ENCODE measurements at regions of chr19 and their contacts with region 1.

Region 1: DNA sequence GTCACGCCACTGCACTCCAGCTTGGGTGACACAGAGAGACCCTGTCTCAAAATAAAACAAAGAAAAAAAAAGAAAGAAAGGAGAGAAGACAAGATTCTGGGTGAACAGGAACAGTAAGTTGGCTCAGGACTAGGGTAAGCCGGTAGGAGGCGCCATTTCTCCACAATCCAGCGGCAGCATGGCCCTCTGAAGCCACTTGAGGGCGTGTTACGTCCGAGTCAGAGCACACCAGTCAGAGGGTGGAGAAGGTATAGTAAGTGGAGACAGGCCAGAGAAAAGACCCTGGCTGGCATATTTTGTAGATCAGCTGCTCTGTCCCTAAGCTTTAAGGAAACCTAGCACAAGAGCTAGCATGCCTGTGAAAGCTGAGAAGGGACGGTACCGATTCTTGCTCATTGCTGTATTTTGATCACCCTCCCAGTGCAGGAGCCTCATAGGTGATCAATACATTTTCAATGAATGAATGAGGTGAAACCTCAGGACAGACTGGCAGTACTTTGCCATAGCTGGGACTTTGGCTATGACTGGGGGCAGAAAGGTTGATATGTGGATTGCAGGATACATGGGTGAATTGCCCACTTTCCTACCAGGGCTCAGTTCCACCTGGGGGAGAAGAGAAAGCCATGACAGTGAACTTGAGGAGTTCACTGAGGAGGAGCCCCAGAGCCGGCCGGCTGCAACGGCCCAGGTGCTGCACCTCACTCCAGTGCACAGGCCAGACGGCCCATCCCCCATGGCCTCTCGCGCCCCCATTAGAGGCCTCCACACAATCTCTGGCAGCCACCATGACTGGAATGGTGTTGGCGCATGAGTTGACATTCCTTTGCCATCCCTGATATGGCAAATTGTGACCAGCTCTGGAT is 23.5 kb downstream of the POU2F2 start:
- DNase-seq: peak; percentile 86 to 91 (median 89)
- H3K4me3 ChIP-seq: no peak overlapping the region
- H3K4me3 Mint-ChIP-seq: no peak overlapping the region
- H3K27ac ChIP-seq: peak overlapping the region in 1 of 2 donors; percentile 28
- H3K27ac Mint-ChIP-seq: peak overlapping the region in 6 of 7 donors; percentile 58 to 72 (median 61)
- H3K4me1 ChIP-seq: peaks cover 0 to 13% of the 10 kb centered on the region in 2 donors
- H3K4me1 Mint-ChIP-seq: peaks cover 25% of the 10 kb centered on the region
- H3K27me3 ChIP-seq: no peaks in the 10 kb centered on the region
- H3K27me3 Mint-ChIP-seq: no peaks in the 10 kb centered on the region
- CTCF ChIP-seq: peak; percentile 100

Region 2: GRCh38 chr19:42132851-42133528 is 24.2 kb after region 1 on chr19:
- intact Hi-C with region 1: loop called in 1 of 2 experiments (anchors 2 kb)
- DNase-seq: peak; percentile 68 to 70 (median 68)
- H3K4me3 ChIP-seq: peak overlapping the region; percentile 86 to 98 (median 97)
- H3K4me3 Mint-ChIP-seq: peak overlapping the region; percentile 98 to 99
- H3K27ac ChIP-seq: peak overlapping the region; percentile 85 to 89
- H3K27ac Mint-ChIP-seq: peak overlapping the region; percentile 80 to 97 (median 95)
- H3K4me1 ChIP-seq: peaks cover 45 to 65% of the 10 kb centered on the region in 2 donors
- H3K4me1 Mint-ChIP-seq: peaks cover 54% of the 10 kb centered on the region
- H3K27me3 ChIP-seq: no peaks in the 10 kb centered on the region
- H3K27me3 Mint-ChIP-seq: peaks cover 0 to 3% (median 3%) of the 10 kb centered on the region in 3 donors
- CTCF ChIP-seq: peak; percentile 99

Region 3: DNA sequence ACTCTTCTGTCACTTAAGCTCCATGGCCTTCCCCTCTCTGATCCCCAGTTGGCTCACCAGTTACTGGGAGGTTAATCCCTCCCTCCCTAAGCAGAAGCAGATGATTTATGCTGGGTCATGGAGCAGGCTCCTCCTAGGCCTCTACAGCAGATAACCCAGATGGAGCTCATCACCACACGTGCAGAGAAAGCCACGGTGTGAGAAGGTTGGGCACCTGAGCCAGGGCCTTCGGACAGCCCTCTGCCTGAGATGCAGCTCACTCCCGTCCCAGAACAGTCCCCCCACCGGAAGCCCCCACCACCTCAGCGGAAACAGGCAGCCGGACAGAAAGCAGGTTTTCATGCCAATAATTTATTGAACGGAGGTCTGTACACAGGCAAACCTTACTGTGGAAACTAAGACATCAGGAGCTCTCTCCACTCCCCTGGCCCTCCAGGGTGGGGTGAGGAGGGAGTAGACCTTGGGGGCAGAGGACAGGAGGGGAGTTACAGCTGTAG is 121.1 kb after region 1 on chr19:
- intact Hi-C with region 1: loop called in 1 of 2 experiments (anchors 10 kb)
- DNase-seq: no peak
- H3K4me3 ChIP-seq: no peak overlapping the region
- H3K4me3 Mint-ChIP-seq: no peak overlapping the region
- H3K27ac ChIP-seq: peak overlapping the region in 1 of 2 donors; percentile 37
- H3K27ac Mint-ChIP-seq: peak overlapping the region in 4 of 7 donors; percentile 52 to 72 (median 70)
- H3K4me1 ChIP-seq: no peaks in the 10 kb centered on the region
- H3K4me1 Mint-ChIP-seq: peaks cover 10% of the 10 kb centered on the region
- H3K27me3 ChIP-seq: no peaks in the 10 kb centered on the region
- H3K27me3 Mint-ChIP-seq: no peaks in the 10 kb centered on the region
- CTCF ChIP-seq: no peak

Region 4: DNA sequence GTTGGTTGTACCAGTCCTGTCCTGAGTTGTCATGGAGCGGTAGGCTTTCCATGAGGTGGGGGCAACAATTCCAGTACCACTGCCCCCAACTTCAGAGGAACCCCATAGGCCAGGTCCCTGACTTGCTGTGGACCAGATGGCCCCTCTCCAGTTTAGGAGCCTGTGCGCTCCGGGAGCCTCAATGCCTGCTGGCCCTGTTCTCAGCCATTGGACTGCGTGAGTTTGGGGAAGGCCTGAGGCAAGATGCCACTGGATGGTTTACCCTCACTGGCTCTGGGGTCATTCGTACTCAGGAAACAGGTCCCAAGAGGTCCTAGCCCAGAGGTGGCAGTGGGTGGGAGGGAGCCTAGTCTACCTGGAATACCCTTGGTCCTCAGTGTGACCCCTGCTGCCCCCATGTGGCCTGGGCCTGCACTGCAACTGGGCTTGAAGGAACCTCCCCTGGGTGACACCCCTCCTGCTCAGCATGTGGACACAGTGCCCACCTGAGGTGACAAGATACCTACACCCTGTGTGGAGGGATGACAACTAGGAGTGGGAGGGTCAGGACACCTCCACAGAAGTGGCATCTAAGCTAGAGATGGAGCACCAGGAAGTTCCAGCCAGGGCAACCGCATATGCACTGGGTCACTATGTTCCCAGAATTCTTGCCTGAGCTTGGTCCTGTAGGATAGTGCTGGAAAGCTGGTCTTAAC is 187.2 kb after region 1 on chr19:
- intact Hi-C with region 1: loop called (anchors 5 to 10 kb)
- DNase-seq: peak; percentile 55 to 65 (median 64)
- H3K4me3 ChIP-seq: no peak overlapping the region
- H3K4me3 Mint-ChIP-seq: no peak overlapping the region
- H3K27ac ChIP-seq: no peak overlapping the region
- H3K27ac Mint-ChIP-seq: peak overlapping the region in 4 of 7 donors; percentile 6 to 77 (median 36)
- H3K4me1 ChIP-seq: no peaks in the 10 kb centered on the region
- H3K4me1 Mint-ChIP-seq: peaks cover 2% of the 10 kb centered on the region
- H3K27me3 ChIP-seq: no peaks in the 10 kb centered on the region
- H3K27me3 Mint-ChIP-seq: peaks cover 0 to 2% (median 0%) of the 10 kb centered on the region in 3 donors
- CTCF ChIP-seq: peak; percentile 98

Region 5: DNA sequence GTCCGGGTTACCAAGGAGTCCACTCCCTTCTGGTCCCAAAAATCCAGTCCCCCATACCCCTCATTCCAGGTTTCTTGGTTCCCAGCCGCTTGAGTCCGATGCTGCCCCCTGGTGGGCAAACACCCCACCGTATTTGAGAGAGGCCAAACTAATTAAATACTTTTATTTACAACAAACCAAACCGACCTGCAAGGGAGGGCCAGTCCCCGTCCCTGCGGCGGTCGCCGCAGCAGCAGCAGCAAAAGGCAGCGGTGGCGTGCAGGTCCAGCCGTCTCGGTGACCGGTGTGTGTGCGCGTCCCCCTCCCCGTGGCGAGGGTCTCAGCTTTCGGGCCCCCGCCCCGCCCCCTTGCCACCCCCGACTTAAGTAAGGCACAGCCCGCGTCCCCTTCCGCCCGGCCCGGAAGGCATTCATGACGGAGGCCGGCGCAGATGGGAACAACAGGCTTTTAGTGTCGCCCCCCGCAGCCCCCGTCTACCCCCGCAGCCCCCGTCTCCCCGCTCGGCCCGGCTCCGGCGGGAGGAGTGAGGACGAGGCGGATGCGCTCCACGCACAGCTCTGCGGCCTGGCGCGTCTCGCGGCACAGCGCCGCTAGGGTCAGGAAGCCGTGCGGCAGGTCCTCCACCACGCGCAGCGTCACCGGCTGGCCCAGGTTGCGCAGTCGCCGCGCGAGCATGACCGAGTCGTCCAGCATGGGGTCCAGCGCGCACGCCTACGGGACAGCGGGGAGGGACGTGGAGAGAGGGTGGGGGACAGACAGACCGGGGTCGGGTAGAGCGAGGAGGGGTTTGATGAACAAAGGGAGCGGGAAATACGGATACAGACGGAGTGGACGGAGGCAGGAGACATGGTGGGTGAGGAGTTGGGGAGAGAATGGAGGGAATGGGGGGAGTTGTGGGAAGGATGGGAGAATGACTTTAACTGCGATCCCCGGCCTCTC is 292.9 kb after region 1 on chr19:
- intact Hi-C with region 1: loop called in 1 of 2 experiments (anchors 1 kb)
- DNase-seq: peak; percentile 68 to 74 (median 74)
- H3K4me3 ChIP-seq: peak overlapping the region; percentile 11 to 71 (median 19)
- H3K4me3 Mint-ChIP-seq: peak overlapping the region; percentile 68 to 90
- H3K27ac ChIP-seq: no peak overlapping the region
- H3K27ac Mint-ChIP-seq: peak overlapping the region in 2 of 7 donors; percentile 26 to 36
- H3K4me1 ChIP-seq: peaks cover 22 to 26% of the 10 kb centered on the region in 2 donors
- H3K4me1 Mint-ChIP-seq: peaks cover 31% of the 10 kb centered on the region
- H3K27me3 ChIP-seq: peaks cover 0 to 9% of the 10 kb centered on the region in 2 donors
- H3K27me3 Mint-ChIP-seq: peaks cover 18 to 27% (median 21%) of the 10 kb centered on the region in 3 donors
- CTCF ChIP-seq: peak; percentile 86

Measured in CD14-positive monocyte (primary cell).